Right ventricle myocardium superior (tissue), 1 donor: ENCODE measurements at regions of chr7 and their contacts with region 1.

Region 1: DNA sequence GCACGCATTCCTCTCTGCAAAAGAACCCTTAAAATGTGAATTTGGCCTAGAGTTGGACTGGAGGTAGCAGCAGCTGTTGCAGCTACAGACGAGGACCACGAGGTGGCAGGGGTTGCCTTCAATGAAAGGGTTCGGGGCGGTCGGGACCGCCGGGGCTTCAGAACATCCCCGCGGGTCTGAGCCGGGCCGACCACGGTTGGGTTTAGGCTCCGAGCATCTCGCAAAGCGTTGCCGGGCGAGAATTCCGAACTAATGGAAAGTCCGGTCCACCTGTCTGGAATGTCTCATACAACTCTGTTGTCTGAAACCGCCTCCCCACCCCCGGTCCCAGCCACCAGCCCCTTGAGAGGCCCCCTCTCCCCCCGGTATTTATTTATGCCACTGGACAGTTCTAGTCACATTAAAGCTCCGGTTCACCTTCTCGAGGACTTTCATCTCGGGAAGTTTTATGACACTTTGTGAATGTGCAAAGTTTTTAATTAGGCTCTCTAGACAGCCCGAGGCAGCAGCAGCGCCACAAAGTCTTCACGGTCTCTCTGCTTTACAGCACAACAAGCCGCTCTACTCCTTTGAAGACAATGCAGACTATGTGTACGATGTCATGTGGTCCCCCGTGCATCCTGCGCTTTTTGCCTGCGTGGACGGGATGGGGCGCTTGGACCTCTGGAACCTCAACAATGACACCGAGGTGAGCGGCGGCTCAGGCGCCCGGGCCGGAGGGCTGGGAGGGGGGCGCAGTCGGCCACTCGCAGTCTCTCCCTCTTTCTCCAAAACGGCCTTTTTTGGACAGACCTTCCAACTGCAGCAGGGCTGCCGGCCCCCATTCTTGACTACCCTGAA is 246.2 kb downstream of the SLC25A13 start:
- DNase-seq: peak; percentile 74
- ATAC-seq: peak; percentile 99

Region 2: GRCh38 chr7:97027427-97028234 is 951.9 kb after region 1 on chr7:
- intact Hi-C with region 1: loop called (anchors 5 kb)
- DNase-seq: peak; percentile 77
- ATAC-seq: peak; percentile 92